A549 (cell line): ENCODE measurements at regions of chr12 and their contacts with region 1.

Region 1: GRCh38 chr12:6723607-6724396 is at the start of gene COPS7A:
- DNase-seq: peak; percentile 99
- ATAC-seq: peak; percentile 98
- H3K4me3 ChIP-seq: peak within 1 kb of the TSS; percentile 61
- H3K27ac ChIP-seq: peak within 1 kb of the TSS; percentile 86 to 89
- H3K4me1 ChIP-seq: peaks cover 13% of the 10 kb centered on the region
- CTCF ChIP-seq: no peak
- EP300 ChIP-seq: no peak
- POLR2A ChIP-seq: peak; percentile 92
- RAD21 ChIP-seq: no peak
- polyA plus RNA-seq, gene COPS7A: 78.8 and 95.0 TPM in 2 replicates

Region 2: GRCh38 chr12:6461401-6462233 is 262.2 kb before region 1 on chr12:
- CTCF ChIA-PET with region 1: no interaction called
- POLR2A ChIA-PET with region 1: no interaction called
- DNase-seq: no peak
- ATAC-seq: no peak
- H3K4me3 ChIP-seq: no peak overlapping the region
- H3K27ac ChIP-seq: no peak overlapping the region
- H3K4me1 ChIP-seq: 0 out of 3 replicates have a peak, but pooled peaks cover 5% of the 10 kb centered on the region
- CTCF ChIP-seq: no peak
- EP300 ChIP-seq: no peak
- POLR2A ChIP-seq: no peak
- RAD21 ChIP-seq: no peak

Region 3: DNA sequence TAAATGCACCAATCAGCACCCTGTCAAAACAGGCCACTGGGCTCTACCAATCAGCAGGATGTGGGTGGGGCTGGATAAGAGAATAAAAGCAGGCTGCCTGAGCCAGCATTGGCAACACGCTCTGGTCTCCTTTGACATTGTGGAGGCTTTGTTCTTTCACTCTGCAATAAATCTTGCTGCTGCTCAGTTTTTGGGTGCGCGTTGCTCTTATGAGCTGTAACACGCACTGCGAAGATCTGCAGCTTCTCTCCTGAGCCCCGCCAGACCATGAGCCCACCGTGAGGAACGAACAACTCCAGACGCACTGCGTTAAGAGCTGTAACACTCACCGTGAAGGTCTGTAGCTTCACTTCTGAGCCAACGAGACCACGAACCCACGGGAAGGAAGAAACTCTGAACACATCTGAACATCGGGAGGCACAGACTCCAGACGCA is 14.8 kb before region 1 on chr12:
- CTCF ChIA-PET with region 1: interaction called, 10 read pairs
- POLR2A ChIA-PET with region 1: interaction called, 9 read pairs
- DNase-seq: no peak
- ATAC-seq: no peak
- H3K4me3 ChIP-seq: no peak overlapping the region
- H3K27ac ChIP-seq: no peak overlapping the region
- H3K4me1 ChIP-seq: no peaks in the 10 kb centered on the region
- CTCF ChIP-seq: no peak
- EP300 ChIP-seq: no peak
- POLR2A ChIP-seq: no peak
- RAD21 ChIP-seq: no peak

Region 4: GRCh38 chr12:6764011-6764828 is 40.4 kb after region 1 on chr12:
- CTCF ChIA-PET with region 1: interaction called, 4 read pairs
- POLR2A ChIA-PET with region 1: interaction called, 34 read pairs
- DNase-seq: peak; percentile 100
- ATAC-seq: peak; percentile 69 to 87
- H3K4me3 ChIP-seq: peak overlapping the region; percentile 97
- H3K27ac ChIP-seq: peak overlapping the region; percentile 95 to 99
- H3K4me1 ChIP-seq: peaks cover 39% of the 10 kb centered on the region
- CTCF ChIP-seq: no peak
- EP300 ChIP-seq: no peak
- POLR2A ChIP-seq: peak; percentile 47
- RAD21 ChIP-seq: no peak

Region 5: GRCh38 chr12:6778574-6779550 is 55.1 kb after region 1 on chr12:
- CTCF ChIA-PET with region 1: interaction called, 10 read pairs
- POLR2A ChIA-PET with region 1: interaction called, 3 read pairs
- DNase-seq: peak; percentile 71 to 91
- ATAC-seq: peak; percentile 94 to 97
- H3K4me3 ChIP-seq: peak overlapping the region; percentile 30; the same call in 2 of the 3 replicates
- H3K27ac ChIP-seq: peak overlapping the region; percentile 34 to 80; a peak in 4 of 6 replicates
- H3K4me1 ChIP-seq: peaks cover 15% of the 10 kb centered on the region; the same call in 2 of the 3 replicates
- CTCF ChIP-seq: peak; percentile 94
- EP300 ChIP-seq: no peak
- POLR2A ChIP-seq: no peak
- RAD21 ChIP-seq: peak; percentile 98 to 99

Region 6: GRCh38 chr12:6843118-6843902 is 119.5 kb after region 1 on chr12:
- CTCF ChIA-PET with region 1: no interaction called
- POLR2A ChIA-PET with region 1: no interaction called
- DNase-seq: no peak
- ATAC-seq: peak in 1 of 2 experiments; percentile 63; a peak in 3 of 6 replicates
- H3K4me3 ChIP-seq: no peak overlapping the region
- H3K27ac ChIP-seq: no peak overlapping the region
- H3K4me1 ChIP-seq: no peaks in the 10 kb centered on the region
- CTCF ChIP-seq: no peak
- EP300 ChIP-seq: no peak
- POLR2A ChIP-seq: no peak
- RAD21 ChIP-seq: no peak

Region 7: GRCh38 chr12:6904280-6905278 is 180.8 kb after region 1 on chr12 and contains the start of gene LRRC23:
- CTCF ChIA-PET with region 1: no interaction called
- POLR2A ChIA-PET with region 1: no interaction called
- DNase-seq: peak; percentile 95 to 98
- ATAC-seq: peak; percentile 94 to 97
- H3K4me3 ChIP-seq: peak within 1 kb of the TSS; percentile 78
- H3K27ac ChIP-seq: peak within 1 kb of the TSS; percentile 82 to 91
- H3K4me1 ChIP-seq: peaks cover 11% of the 10 kb centered on the region; the same call in 2 of the 3 replicates
- CTCF ChIP-seq: no peak
- EP300 ChIP-seq: no peak
- POLR2A ChIP-seq: peak; percentile 71
- RAD21 ChIP-seq: no peak
- polyA plus RNA-seq, gene LRRC23: 33.3 and 40.4 TPM in 2 replicates